CD14-positive monocyte (primary cell): ENCODE measurements at regions of chr19 and their contacts with region 1.

Region 1: GRCh38 chr19:16104722-16105121 is 7.0 kb upstream of the RAB8A start:
- DNase-seq: peak in 2 of 3 donors; percentile 29 to 32
- H3K4me3 ChIP-seq: no peak overlapping the region
- H3K4me3 Mint-ChIP-seq: no peak overlapping the region
- H3K27ac ChIP-seq: peak overlapping the region; percentile 41 to 52
- H3K27ac Mint-ChIP-seq: peak overlapping the region; percentile 73 to 93 (median 85)
- H3K4me1 ChIP-seq: peaks cover 18 to 26% of the 10 kb centered on the region in 2 donors
- H3K4me1 Mint-ChIP-seq: peaks cover 21% of the 10 kb centered on the region
- H3K27me3 ChIP-seq: no peaks in the 10 kb centered on the region
- H3K27me3 Mint-ChIP-seq: peaks cover 0 to 2% (median 0%) of the 10 kb centered on the region in 3 donors
- CTCF ChIP-seq: no peak

Region 2: GRCh38 chr19:16088351-16089009 is 16.2 kb before region 1 on chr19:
- intact Hi-C with region 1: loop called in 1 of 2 experiments (anchors 2 kb)
- DNase-seq: no peak
- H3K4me3 ChIP-seq: no peak overlapping the region
- H3K4me3 Mint-ChIP-seq: no peak overlapping the region
- H3K27ac ChIP-seq: no peak overlapping the region
- H3K27ac Mint-ChIP-seq: peak overlapping the region in 3 of 7 donors; percentile 26 to 58 (median 32)
- H3K4me1 ChIP-seq: peaks cover 15 to 34% of the 10 kb centered on the region in 2 donors
- H3K4me1 Mint-ChIP-seq: peaks cover 24% of the 10 kb centered on the region
- H3K27me3 ChIP-seq: no peaks in the 10 kb centered on the region
- H3K27me3 Mint-ChIP-seq: peaks cover 0 to 2% (median 0%) of the 10 kb centered on the region in 3 donors
- CTCF ChIP-seq: no peak